ENCODE measurements at regions of chr4 and their contacts with region 1.

Region 1: GRCh38 chr4:1329408-1330371 is 17.3 kb upstream of the UVSSA start:
- DNase-seq: peak; percentile 50
- ATAC-seq: no peak
- H3K4me3 Mint-ChIP-seq: peak overlapping the region; percentile 39
- H3K27ac Mint-ChIP-seq: peak overlapping the region; percentile 89
- H3K4me1 Mint-ChIP-seq: peaks cover 41% of the 10 kb centered on the region
- H3K27me3 Mint-ChIP-seq: no peaks in the 10 kb centered on the region

Region 2: GRCh38 chr4:1309261-1310010 is 20.3 kb before region 1 on chr4:
- CTCF ChIA-PET with region 1: interaction called, 3 read pairs
- POLR2A ChIA-PET with region 1: no interaction called
- intact Hi-C with region 1: loop called in 1 of 2 experiments (anchors 2 kb)
- DNase-seq: peak; percentile 74
- ATAC-seq: peak; percentile 79
- H3K4me3 Mint-ChIP-seq: peak overlapping the region; percentile 64
- H3K27ac Mint-ChIP-seq: peak overlapping the region; percentile 82
- H3K4me1 Mint-ChIP-seq: peaks cover 59% of the 10 kb centered on the region
- H3K27me3 Mint-ChIP-seq: no peaks in the 10 kb centered on the region

Measured in activated CD4-positive, alpha-beta T cell treated with anti-CD3 and anti-CD28 coated beads for 36 hours (primary cell).